Tibial artery (tissue), 4 donors: ENCODE measurements at regions of chr1 and their contacts with region 1.

Region 1: DNA sequence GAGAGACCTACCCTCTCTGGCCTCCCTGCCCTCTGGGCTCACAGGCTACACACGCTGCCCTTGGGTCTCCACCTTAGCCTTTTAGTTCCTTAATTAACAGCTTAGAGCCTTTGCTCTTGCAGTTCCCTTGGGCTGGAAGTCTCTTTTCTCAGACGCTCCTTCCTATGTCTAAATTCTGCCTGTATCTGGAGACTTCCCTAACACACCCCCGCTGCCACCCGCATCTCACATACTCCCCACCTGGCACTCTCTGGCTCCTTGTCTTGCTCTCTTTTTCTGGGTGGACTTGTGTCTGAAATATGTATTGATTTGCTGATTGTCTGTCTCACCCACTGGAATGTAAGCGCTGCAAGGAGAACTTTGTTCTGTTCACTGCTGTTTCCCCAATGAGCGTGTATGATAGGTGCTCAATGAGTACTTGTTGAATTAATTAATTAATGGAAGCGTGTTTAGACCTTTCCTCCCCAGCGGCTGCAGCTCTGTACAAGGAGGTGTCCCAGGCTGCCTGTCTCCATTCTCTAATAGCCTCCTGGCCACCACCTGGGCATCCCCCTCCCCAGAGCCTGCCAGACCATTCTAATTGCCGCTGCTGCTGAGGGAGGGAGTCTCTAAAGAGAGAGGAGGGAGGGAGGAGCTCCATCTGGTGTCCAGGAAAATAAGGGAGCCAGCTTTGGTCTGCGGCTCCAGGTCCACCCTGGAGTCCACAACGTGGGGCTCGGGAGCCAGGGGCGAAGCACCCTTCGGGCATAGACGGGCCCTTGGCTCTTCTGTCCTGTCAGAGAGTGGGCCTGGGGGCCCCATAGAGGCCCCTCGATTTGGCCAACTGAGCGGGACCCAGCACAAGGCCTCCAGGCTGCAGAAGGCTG is 95.4 kb downstream of the RNF220 start:
- DNase-seq: no peak
- H3K4me3 ChIP-seq: no peak overlapping the region
- H3K27ac ChIP-seq: no peak overlapping the region
- H3K4me1 ChIP-seq: peaks cover 0 to 13% (median 5%) of the 10 kb centered on the region in 4 donors
- H3K27me3 ChIP-seq: peaks cover 0 to 26% of the 10 kb centered on the region in 2 donors
- CTCF ChIP-seq: peak in 1 of 2 experiments; percentile 37

Region 2: GRCh38 chr1:44220001-44220733 is 280.2 kb before region 1 on chr1:
- intact Hi-C with region 1: loop called (anchors 10 kb)
- DNase-seq: peak in 1 of 2 donors; percentile 61
- H3K4me3 ChIP-seq: no peak overlapping the region
- H3K27ac ChIP-seq: no peak overlapping the region
- H3K4me1 ChIP-seq: no peaks in the 10 kb centered on the region
- H3K27me3 ChIP-seq: no peaks in the 10 kb centered on the region
- CTCF ChIP-seq: no peak

Region 3: DNA sequence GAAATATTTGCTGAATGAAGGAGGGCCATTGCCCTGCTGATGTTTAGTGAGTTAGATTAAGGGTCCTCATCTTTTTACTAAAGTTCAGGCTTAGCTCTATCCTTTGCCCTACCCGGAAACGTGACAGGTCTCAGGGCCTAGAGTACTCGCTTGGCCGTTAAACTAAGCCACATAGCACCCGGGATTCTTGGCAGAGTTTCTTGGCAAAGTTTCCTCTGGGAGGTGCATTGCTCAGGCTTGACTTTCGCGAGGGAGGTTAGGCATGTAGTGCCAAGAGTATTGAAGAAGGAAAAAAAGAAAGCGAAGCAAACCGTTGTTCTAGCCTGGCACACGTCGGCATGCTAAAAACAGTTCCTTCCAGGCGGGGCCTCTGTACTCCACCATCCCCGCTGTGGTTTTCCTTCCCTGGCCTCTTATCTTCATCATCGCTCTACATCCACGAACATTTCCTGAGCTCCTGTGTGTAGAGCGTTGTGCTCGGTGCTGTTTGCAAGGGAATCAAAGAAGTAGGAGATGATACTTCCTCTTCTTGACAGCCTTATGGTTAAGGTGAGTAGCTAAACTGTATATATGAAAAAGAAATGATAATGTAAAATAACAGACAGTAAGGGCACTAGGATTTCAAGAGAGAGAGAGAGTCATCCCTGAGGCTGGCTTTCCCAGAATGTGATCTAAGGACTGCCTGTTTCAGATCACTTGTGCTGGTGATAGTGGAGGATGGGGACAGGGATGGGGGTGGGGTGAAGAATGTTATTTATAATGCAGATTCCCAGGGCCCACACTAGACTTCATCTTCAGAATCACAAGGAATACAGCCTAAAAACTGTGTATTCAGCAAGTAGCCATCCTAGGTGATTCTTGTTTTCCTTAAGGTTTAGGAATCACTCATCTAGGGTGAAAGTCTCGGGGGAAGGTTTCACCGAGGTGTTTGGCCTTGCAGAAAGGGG is 76.5 kb before region 1 on chr1:
- intact Hi-C with region 1: loop called (anchors 10 kb)
- DNase-seq: peak; percentile 38 to 82
- H3K4me3 ChIP-seq: peak overlapping the region; percentile 17 to 22
- H3K27ac ChIP-seq: peak overlapping the region; percentile 16 to 27
- H3K4me1 ChIP-seq: peaks cover 0 to 23% (median 15%) of the 10 kb centered on the region in 4 donors
- H3K27me3 ChIP-seq: peaks cover 0 to 49% of the 10 kb centered on the region in 2 donors
- CTCF ChIP-seq: no peak